Mammary epithelial cell (primary cell): ENCODE measurements at regions of chr10 and their contacts with region 1.

Region 1: GRCh38 chr10:115432188-115432775 is 339.1 kb downstream of the ATRNL1 start:
- DNase-seq: peak; percentile 8
- H3K4me3 ChIP-seq: no peak overlapping the region
- H3K27ac ChIP-seq: no peak overlapping the region
- H3K4me1 ChIP-seq: no peaks in the 10 kb centered on the region
- H3K27me3 ChIP-seq: no peaks in the 10 kb centered on the region
- CTCF ChIP-seq: peak; percentile 41 to 56

Region 2: DNA sequence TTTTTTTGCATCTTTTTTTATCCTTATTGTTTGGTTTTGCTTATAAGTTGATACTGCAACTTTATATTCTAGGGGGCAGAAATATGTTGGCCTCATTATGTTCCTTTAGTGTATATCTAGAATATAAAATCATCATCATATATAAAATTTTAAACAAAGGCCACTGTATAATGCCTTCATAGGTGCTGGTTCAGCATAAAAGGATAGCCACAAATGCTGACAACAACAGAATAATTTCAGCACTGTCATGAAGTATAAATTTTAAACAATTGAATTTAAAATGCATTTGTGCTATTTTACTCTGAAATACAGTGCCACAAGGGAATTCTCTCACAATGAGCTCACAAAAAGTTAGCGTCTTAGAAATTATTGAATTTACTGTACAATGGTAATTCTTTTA is 53.2 kb before region 1 on chr10:
- CTCF ChIA-PET with region 1: no interaction called
- dilution Hi-C with region 1: no loop called
- in situ Hi-C with region 1: no loop called
- intact Hi-C with region 1: no loop called
- DNase-seq: no peak
- H3K4me3 ChIP-seq: no peak overlapping the region
- H3K27ac ChIP-seq: no peak overlapping the region
- H3K4me1 ChIP-seq: no peaks in the 10 kb centered on the region
- H3K27me3 ChIP-seq: no peaks in the 10 kb centered on the region
- CTCF ChIP-seq: no peak

Region 3: DNA sequence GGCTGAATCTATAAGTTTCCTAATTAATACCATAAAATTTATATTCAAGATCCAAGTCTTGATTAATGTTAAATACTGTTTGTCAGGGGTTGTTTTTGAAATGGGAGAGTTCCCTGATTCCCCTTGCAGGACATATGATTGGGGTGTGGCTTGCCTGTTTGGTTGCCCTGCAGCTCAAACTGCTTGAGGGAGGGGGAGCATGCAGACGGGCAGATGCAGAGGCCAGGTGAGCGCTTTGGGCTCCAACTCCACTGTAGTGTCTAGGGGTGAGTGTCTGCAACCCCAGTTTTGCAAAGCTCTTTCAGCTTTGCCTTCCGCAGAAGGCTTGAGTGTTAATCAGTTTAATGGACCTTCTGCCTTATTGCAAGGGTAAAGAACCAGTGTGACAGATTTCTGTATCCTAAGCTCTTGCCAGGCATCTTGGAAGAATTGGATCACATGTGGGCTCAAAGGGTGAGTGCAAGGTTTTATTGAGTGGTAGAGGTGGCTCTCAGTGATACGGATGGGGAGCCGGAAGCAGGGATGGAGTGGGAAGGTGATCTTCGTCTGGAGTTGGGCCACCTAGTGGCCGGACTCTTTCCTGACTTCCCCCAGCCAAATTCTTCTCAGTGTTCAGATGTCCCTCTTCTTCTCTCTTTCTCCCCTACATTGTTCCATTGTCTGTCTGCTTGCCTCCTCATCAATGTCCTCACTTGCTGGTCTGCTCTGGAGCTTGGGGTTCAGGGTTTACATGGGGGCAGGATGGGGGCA is 140.6 kb after region 1 on chr10:
- CTCF ChIA-PET with region 1: no interaction called
- dilution Hi-C with region 1: no loop called
- in situ Hi-C with region 1: no loop called
- intact Hi-C with region 1: loop called (anchors 2 kb)
- DNase-seq: peak; percentile 0
- H3K4me3 ChIP-seq: no peak overlapping the region
- H3K27ac ChIP-seq: no peak overlapping the region
- H3K4me1 ChIP-seq: no peaks in the 10 kb centered on the region
- H3K27me3 ChIP-seq: no peaks in the 10 kb centered on the region
- CTCF ChIP-seq: peak; percentile 32 to 58

Region 4: DNA sequence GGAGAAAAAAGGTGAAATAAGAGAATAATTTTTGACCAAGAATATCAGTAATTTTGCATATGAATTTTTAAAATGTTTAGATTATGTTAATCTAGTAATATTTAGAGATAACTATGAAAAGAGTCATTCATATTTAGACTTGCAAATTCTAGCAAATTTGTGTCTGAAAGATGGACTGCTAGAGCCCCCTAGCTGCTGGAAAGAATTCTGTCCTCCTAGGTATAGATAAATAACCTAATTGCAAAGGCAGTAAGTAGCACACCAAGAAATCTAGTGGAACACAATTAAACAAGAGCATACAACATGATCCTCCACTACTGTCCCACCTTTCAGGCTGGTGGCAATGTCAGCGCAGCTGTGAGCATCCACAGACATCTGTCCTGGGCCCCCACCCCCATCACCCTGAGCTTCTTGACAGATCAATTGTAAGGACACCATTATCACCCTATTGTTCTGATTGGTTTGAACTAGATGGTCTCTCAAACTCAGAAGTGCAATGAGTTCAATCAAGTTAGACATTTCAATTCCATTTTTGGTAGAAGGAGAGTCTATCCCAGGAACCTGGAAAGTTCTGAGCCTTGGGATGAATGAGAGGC is 855.7 kb after region 1 on chr10:
- CTCF ChIA-PET with region 1: no interaction called
- dilution Hi-C with region 1: no loop called
- in situ Hi-C with region 1: loop called in 1 of 2 experiments (anchors 25 kb)
- intact Hi-C with region 1: loop called (anchors 2 kb)
- DNase-seq: no peak
- H3K4me3 ChIP-seq: no peak overlapping the region
- H3K27ac ChIP-seq: no peak overlapping the region
- H3K4me1 ChIP-seq: no peaks in the 10 kb centered on the region
- H3K27me3 ChIP-seq: no peaks in the 10 kb centered on the region
- CTCF ChIP-seq: peak; percentile 70 to 72